Mammary epithelial cell (primary cell): ENCODE measurements at regions of chr15 and their contacts with region 1.

Region 1: GRCh38 chr15:60397772-60398445 is at the start of gene ANXA2:
- DNase-seq: peak; percentile 91
- H3K4me3 ChIP-seq: peak within 1 kb of the TSS; percentile 63 to 85 (median 67)
- H3K27ac ChIP-seq: peak within 1 kb of the TSS; percentile 99
- H3K4me1 ChIP-seq: peaks cover 66% of the 10 kb centered on the region
- H3K27me3 ChIP-seq: no peaks in the 10 kb centered on the region
- CTCF ChIP-seq: no peak
- total RNA-seq, gene ANXA2: 5,384 to 5,597 TPM

Region 2: DNA sequence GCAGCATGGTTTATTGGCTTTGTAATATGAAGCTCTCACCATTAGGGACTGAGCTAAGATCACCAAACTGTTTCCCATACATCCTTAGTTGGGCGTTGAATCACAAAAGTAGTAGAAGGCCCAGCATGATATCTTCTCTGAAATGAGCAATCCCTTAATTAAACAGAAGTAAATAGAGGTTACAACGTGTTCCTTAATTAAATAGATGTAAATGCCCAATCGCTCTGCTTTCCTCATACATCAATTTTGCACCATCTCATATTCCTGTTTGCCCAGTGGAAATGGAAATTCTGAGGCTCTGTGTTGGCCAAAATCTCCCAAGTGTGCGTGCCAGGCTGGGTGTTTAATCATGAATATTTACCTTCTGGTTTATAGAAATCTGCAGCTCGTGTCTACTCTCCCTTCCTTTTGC is 501.2 kb before region 1 on chr15:
- CTCF ChIA-PET with region 1: no interaction called
- dilution Hi-C with region 1: no loop called
- in situ Hi-C with region 1: no loop called
- intact Hi-C with region 1: no loop called
- DNase-seq: no peak
- H3K4me3 ChIP-seq: no peak overlapping the region
- H3K27ac ChIP-seq: no peak overlapping the region
- H3K4me1 ChIP-seq: peaks cover 3% of the 10 kb centered on the region
- H3K27me3 ChIP-seq: no peaks in the 10 kb centered on the region
- CTCF ChIP-seq: no peak

Region 3: GRCh38 chr15:60179786-60180391 is 218.0 kb before region 1 on chr15:
- CTCF ChIA-PET with region 1: no interaction called
- dilution Hi-C with region 1: no loop called
- in situ Hi-C with region 1: no loop called
- intact Hi-C with region 1: no loop called
- DNase-seq: peak; percentile 32
- H3K4me3 ChIP-seq: no peak overlapping the region
- H3K27ac ChIP-seq: no peak overlapping the region
- H3K4me1 ChIP-seq: peaks cover 6% of the 10 kb centered on the region
- H3K27me3 ChIP-seq: no peaks in the 10 kb centered on the region
- CTCF ChIP-seq: peak; percentile 90 to 98

Region 4: DNA sequence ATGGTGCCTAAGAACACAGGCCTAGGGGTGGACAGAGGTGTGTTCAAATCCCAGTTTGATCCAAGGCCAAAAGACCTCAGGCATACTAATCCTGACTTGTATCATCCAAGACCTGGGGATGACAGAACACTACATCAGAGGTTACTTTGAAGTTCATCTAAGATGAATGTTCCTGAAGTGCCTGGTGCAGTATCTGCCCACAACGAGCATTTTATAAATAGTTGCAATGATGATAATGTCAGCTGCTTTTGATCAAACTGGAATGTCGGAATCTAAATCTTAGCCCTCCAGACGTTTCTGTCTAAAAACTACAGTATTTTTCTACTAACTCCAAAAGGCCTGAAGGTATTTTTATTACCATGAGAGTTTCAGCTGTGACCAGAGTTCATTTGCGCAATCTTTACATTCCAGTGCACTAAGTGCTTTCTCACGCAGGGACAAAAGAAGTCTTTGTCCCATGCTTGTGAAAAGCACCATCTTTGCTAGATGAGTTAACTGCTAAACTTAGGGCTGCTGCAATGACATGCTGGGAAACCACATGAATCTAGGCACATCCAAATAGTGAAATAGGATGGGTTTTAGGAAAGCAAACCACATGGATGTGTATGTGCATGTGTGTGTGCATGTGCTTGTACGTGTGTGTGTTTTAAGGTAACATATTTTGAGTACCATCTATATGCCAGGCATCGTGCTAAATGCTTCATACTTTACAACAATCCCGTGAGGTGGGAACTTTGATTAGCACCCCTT is 18.2 kb before region 1 on chr15:
- CTCF ChIA-PET with region 1: no interaction called
- dilution Hi-C with region 1: no loop called
- in situ Hi-C with region 1: no loop called
- intact Hi-C with region 1: loop called (anchors 1 kb)
- DNase-seq: peak; percentile 93
- H3K4me3 ChIP-seq: no peak overlapping the region
- H3K27ac ChIP-seq: peak overlapping the region; percentile 94
- H3K4me1 ChIP-seq: peaks cover 92% of the 10 kb centered on the region
- H3K27me3 ChIP-seq: no peaks in the 10 kb centered on the region
- CTCF ChIP-seq: no peak

Region 5: DNA sequence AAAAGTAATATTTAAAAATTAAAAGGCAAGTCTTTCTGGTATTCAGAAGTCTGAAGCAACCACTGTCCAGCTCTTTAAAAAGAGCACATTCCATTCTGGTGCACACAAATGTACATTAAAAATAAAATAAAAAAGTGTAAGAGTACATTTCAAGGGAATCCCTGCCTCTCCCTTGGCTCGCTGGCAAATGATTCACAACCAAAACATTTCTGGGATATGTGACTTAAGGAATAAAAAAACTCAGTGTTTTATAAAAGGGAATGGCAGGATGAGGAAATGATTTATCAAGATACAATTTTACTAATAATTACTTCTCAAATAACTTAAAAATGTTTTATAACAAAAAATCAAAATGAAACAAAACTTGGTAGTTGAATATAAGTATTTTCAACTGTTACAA is 23.6 kb after region 1 on chr15:
- CTCF ChIA-PET with region 1: no interaction called
- dilution Hi-C with region 1: no loop called
- in situ Hi-C with region 1: no loop called
- intact Hi-C with region 1: loop called (anchors 1 kb)
- DNase-seq: peak; percentile 63
- H3K4me3 ChIP-seq: no peak overlapping the region
- H3K27ac ChIP-seq: peak overlapping the region; percentile 99
- H3K4me1 ChIP-seq: peaks cover 53% of the 10 kb centered on the region
- H3K27me3 ChIP-seq: no peaks in the 10 kb centered on the region
- CTCF ChIP-seq: no peak

Region 6: DNA sequence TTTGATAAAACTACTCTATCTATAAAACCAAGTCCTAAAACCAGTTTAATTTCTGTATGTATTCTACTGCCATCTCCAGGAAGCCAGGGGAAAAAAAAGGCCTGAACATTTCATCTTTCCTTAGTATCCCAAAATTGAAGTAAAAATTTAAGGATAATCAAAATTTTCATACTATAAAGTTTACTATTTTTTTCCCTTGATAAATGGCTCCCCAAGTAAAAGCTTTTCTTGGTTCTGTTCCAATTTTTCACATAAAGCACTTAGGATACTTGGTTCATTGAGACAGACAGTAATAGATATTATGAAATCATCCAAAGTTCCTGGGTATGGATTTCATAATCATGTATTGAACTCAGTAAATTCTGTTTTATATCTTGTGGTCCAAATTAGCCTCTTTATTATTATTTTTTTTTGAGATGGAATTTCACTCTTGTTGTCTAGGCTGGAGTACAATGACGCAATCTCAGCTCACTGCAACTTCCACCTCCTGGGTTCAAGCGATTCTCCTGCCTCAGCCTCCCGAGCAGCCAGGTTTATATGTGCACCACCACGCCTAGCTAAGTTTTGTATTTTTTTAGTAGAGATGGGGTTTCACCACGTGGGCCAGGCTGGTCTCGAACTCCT is 46.5 kb after region 1 on chr15:
- CTCF ChIA-PET with region 1: interaction called, 7 read pairs
- dilution Hi-C with region 1: no loop called
- in situ Hi-C with region 1: no loop called
- intact Hi-C with region 1: loop called (anchors 1 kb)
- DNase-seq: peak; percentile 26
- H3K4me3 ChIP-seq: no peak overlapping the region
- H3K27ac ChIP-seq: no peak overlapping the region
- H3K4me1 ChIP-seq: peaks cover 9% of the 10 kb centered on the region
- H3K27me3 ChIP-seq: no peaks in the 10 kb centered on the region
- CTCF ChIP-seq: peak; percentile 60 to 63

Region 7: DNA sequence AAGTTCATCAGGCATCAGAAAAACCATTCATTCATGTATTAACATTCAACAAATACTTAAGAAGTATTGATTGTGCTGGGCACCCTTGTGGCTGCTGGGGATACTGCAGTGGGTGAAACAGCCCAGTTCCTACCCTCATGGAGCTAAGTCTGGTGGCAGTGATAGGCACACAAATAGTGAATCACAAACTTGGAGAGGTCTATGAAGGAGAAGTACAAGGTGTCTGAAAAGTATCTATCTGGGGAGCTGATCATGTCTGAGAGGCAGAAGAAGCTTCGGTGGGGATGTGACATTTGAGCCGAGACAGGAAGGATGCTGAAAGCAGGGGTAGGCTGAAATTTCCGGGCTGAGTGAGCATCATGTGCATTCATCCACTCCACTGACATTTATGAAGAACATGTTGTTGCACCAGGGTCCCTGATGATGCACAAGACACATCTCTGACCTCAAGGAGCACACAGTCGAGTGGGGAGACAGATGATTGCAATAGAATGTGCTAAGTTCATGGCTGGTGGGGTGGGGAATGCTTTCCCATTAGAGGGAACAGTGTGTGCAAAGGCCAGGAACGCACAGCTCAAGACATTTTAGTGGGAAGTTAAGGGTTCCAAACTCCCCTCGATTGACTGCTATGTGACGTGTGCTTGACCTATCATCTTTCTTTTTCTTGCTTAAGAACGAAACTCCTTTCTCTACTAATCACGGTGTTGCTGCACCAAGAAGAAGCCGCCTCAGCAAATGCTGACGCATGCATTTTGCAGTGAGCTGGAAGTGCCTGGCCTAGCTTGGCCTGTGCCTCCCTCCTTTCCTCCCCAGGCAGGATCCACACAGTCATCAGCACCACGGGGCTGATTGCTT is 390.2 kb after region 1 on chr15:
- CTCF ChIA-PET with region 1: no interaction called
- dilution Hi-C with region 1: no loop called
- in situ Hi-C with region 1: no loop called
- intact Hi-C with region 1: no loop called
- DNase-seq: no peak
- H3K4me3 ChIP-seq: no peak overlapping the region
- H3K27ac ChIP-seq: no peak overlapping the region
- H3K4me1 ChIP-seq: peaks cover 6% of the 10 kb centered on the region
- H3K27me3 ChIP-seq: peaks cover 2% of the 10 kb centered on the region
- CTCF ChIP-seq: peak; percentile 35 to 48